Activated CD4-positive, alpha-beta T cell treated with anti-CD3 and anti-CD28 coated beads for 36 hours (primary cell): ENCODE measurements at regions of chr11 and their contacts with region 1.

Region 1: DNA sequence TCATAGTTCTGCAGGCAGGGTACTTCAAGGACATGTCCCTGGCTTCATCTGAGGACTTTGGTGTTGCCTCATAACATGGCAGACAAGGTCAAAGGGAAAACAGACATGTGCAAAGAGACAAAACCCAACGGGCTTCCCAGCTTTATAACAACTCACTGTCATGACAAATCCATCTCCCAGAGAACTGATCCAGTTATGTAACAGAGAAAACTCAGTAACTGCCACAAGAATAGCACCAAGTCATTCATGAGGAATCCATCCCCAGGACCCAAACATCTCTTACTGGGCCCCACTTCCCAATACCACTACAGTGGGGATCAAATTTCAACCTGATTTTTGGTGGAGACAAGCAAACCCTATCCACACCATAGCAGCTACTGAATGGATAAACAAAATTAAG is 13.0 kb downstream of the OR52N4 start:
- DNase-seq: no peak
- ATAC-seq: no peak
- H3K4me3 Mint-ChIP-seq: no peak overlapping the region
- H3K27ac Mint-ChIP-seq: no peak overlapping the region
- H3K4me1 Mint-ChIP-seq: no peaks in the 10 kb centered on the region
- H3K27me3 Mint-ChIP-seq: no peaks in the 10 kb centered on the region

Region 2: GRCh38 chr11:5791165-5791564 is 24.1 kb after region 1 on chr11 and contains the start of gene OR52N1:
- CTCF ChIA-PET with region 1: no interaction called
- POLR2A ChIA-PET with region 1: no interaction called
- intact Hi-C with region 1: loop called (anchors 1 kb)
- DNase-seq: no peak
- ATAC-seq: no peak
- H3K4me3 Mint-ChIP-seq: no peak within 1 kb of the TSS
- H3K27ac Mint-ChIP-seq: no peak within 1 kb of the TSS
- H3K4me1 Mint-ChIP-seq: no peaks in the 10 kb centered on the region
- H3K27me3 Mint-ChIP-seq: peaks cover 7% of the 10 kb centered on the region
- total RNA-seq, gene OR52N1: not detected